Heart left ventricle (tissue), 16 donors: ENCODE measurements at regions of chr16 and their contacts with region 1.

Region 1: GRCh38 chr16:22098405-22099255 is 6.3 kb downstream of the VWA3A start:
- DNase-seq: no peak
- ATAC-seq: peak in 3 of 4 donors; percentile 51 to 72 (median 67)
- H3K4me3 ChIP-seq: no peak overlapping the region
- H3K27ac ChIP-seq: no peak overlapping the region
- H3K4me1 ChIP-seq: peaks cover 0 to 3% (median 0%) of the 10 kb centered on the region in 12 donors
- H3K27me3 ChIP-seq: peaks cover 0 to 3% (median 0%) of the 10 kb centered on the region in 9 donors
- CTCF ChIP-seq: peak; percentile 40 to 70 (median 56)
- POLR2A ChIP-seq: no peak

Region 2: DNA sequence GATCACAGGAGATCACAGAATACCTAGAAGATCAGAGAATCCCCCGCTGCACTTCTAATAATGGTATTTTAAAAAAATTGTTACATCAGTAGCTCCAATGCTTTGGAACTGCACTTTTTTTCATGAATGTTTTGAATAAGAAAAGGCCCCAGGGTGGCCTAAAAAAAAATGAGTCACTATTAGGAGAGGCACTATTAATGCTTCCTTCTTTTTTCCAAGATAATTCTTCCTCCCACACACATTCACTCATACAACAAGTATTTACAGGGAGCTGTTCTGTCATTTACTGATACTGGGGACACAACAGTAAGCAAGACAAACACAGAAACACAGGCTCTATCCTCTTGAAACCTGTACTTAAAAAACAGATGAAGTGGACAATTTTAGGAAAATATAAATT is 97.0 kb before region 1 on chr16:
- intact Hi-C with region 1: loop called in 8 of 10 experiments (anchors 1 to 5 kb)
- DNase-seq: no peak
- ATAC-seq: peak in 1 of 4 donors; percentile 57
- H3K4me3 ChIP-seq: no peak overlapping the region
- H3K27ac ChIP-seq: no peak overlapping the region
- H3K4me1 ChIP-seq: peaks cover 0 to 32% (median 10%) of the 10 kb centered on the region in 12 donors
- H3K27me3 ChIP-seq: no peaks in the 10 kb centered on the region
- CTCF ChIP-seq: no peak
- POLR2A ChIP-seq: no peak

Region 3: DNA sequence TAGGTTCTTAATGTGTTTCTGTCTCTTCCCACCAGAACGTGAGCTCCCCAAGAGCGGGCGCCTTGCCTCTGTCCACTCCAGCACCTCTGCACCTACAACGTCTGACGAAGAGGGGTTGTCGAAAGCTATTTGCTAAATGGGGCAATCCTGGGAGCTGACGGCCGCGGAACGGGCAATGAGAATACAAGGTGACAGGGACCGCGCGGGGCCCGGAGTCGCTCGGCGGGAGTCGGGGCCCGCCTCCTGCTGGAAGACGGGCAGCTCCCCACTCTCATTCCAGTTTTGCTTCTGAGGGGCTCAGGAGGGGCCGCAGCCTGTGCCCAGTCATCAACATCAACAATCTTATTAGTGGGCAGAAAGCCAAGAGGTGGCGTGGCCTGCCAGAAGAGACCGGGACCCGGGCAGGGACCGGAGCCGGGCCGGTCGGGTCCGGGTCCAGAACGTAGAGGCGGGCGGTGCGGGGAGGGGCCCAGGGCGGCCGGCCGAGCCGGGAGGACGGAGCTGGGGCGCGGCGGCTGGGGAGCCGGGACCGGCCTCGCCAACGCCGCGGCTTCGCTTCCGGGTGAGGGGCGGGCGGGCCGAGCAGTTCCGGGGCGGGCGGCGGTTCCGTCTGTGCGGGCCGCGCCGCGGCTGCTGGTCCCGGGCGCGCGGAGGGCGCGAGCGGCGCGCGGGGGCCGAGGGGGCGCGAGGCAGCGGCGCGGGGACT is 91.0 kb before region 1 on chr16 and contains the start of gene MOSMO:
- intact Hi-C with region 1: loop called in 6 of 10 experiments (anchors 1 to 5 kb)
- DNase-seq: peak; percentile 81 to 88 (median 81)
- ATAC-seq: peak; percentile 84 to 97 (median 94)
- H3K4me3 ChIP-seq: peak within 1 kb of the TSS; percentile 55 to 100 (median 94)
- H3K27ac ChIP-seq: peak within 1 kb of the TSS; percentile 42 to 97 (median 90)
- H3K4me1 ChIP-seq: peaks cover 0 to 44% (median 25%) of the 10 kb centered on the region in 12 donors
- H3K27me3 ChIP-seq: no peaks in the 10 kb centered on the region
- CTCF ChIP-seq: peak in 3 of 12 donors; percentile 17 to 38 (median 36)
- POLR2A ChIP-seq: peak in 1 of 2 donors; percentile 56
- total RNA-seq, gene MOSMO: 8.7 to 15.0 (median 11.7) TPM

Region 4: DNA sequence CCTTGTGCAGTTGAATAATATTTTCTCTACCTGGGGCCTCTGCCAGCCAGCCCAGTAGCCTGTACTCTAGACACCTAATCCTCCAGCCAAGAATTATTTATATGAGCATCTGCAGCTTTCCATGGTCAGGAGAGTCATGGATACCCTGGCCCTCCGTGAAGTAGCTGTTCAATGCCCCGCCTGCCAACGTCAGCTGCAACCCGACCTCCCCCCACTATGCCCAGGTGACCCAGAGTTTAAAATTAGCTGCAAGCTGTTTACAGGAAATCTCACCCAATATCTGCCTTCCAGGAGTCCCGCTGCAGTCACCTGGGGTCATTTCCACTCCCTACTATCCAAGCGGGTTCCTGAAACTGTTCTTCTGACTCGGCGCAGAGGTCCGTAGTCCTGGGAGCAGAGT is 76.0 kb after region 1 on chr16:
- intact Hi-C with region 1: loop called in 1 of 10 experiments (anchors 10 kb)
- DNase-seq: peak in 1 of 5 donors; percentile 23
- ATAC-seq: no peak
- H3K4me3 ChIP-seq: no peak overlapping the region
- H3K27ac ChIP-seq: no peak overlapping the region
- H3K4me1 ChIP-seq: no peaks in the 10 kb centered on the region
- H3K27me3 ChIP-seq: no peaks in the 10 kb centered on the region
- CTCF ChIP-seq: no peak
- POLR2A ChIP-seq: no peak